CD4-positive, alpha-beta memory T cell (primary cell): ENCODE measurements at regions of chr10 and their contacts with region 1.

Region 1: GRCh38 chr10:28381903-28382347 is 79.1 kb upstream of the MPP7 start:
- DNase-seq: peak; percentile 78 to 85 (median 82)
- H3K4me3 ChIP-seq: no peak overlapping the region
- H3K4me3 Mint-ChIP-seq: peak overlapping the region in 3 of 8 donors; percentile 42 to 63 (median 45)
- H3K27ac ChIP-seq: no peak overlapping the region
- H3K27ac Mint-ChIP-seq: peak overlapping the region in 5 of 7 donors; percentile 0 to 94 (median 68)
- H3K4me1 ChIP-seq: peaks cover 17% of the 10 kb centered on the region
- H3K4me1 Mint-ChIP-seq: peaks cover 18 to 25% (median 21%) of the 10 kb centered on the region in 4 donors
- H3K27me3 ChIP-seq: no peaks in the 10 kb centered on the region
- H3K27me3 Mint-ChIP-seq: peaks cover 4 to 5% of the 10 kb centered on the region in 2 donors

Region 2: DNA sequence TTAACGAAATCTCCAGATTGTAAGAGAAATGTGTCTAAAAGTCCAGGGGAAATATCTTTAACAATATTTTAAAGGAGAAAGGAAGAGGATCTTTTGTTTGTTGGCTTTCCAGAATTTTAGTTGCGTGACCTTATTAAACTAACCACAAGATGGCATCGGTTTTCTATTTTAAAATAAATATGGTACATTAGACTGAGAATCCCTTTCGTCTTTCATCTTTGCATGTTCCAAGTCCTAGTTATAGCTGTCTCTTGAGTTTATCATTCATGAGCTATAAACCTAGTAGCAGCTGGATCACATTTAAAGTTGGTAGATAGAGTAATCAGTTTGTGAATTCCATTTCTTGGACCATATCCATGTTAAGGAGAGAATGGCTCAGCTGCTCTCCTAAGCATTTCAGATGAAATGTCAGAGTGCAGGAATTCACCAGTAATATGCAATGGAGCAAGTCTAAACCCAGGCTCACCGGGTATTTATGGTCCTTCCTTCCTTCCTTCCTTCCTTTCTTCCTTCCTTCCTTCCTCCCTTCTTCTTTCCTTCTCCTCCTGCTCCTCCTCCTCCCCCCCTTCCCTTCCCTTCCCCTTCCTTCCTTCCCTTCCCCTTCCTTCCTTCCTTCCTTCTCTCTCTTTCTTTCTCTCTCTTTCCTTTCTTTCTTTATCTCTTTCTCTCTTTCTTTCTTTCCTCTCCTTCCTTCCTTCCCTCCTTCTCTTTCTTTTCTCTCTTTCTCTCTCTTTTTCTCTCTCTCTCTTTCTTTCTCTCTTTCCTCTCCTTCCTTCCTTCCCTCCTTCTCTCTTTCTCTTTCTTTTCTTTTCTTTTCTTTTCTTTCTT is 935.6 kb before region 1 on chr10:
- CTCF ChIA-PET with region 1: no interaction called
- POLR2A ChIA-PET with region 1: no interaction called
- intact Hi-C with region 1: loop called (anchors 5 kb)
- DNase-seq: peak in 4 of 5 donors; percentile 46 to 50 (median 47)
- H3K4me3 ChIP-seq: no peak overlapping the region
- H3K4me3 Mint-ChIP-seq: peak overlapping the region in 3 of 8 donors; percentile 13 to 41 (median 36)
- H3K27ac ChIP-seq: no peak overlapping the region
- H3K27ac Mint-ChIP-seq: peak overlapping the region in 2 of 7 donors; percentile 8 to 45
- H3K4me1 ChIP-seq: peaks cover 12% of the 10 kb centered on the region
- H3K4me1 Mint-ChIP-seq: peaks cover 3 to 17% (median 13%) of the 10 kb centered on the region in 4 donors
- H3K27me3 ChIP-seq: no peaks in the 10 kb centered on the region
- H3K27me3 Mint-ChIP-seq: no peaks in the 10 kb centered on the region

Region 3: DNA sequence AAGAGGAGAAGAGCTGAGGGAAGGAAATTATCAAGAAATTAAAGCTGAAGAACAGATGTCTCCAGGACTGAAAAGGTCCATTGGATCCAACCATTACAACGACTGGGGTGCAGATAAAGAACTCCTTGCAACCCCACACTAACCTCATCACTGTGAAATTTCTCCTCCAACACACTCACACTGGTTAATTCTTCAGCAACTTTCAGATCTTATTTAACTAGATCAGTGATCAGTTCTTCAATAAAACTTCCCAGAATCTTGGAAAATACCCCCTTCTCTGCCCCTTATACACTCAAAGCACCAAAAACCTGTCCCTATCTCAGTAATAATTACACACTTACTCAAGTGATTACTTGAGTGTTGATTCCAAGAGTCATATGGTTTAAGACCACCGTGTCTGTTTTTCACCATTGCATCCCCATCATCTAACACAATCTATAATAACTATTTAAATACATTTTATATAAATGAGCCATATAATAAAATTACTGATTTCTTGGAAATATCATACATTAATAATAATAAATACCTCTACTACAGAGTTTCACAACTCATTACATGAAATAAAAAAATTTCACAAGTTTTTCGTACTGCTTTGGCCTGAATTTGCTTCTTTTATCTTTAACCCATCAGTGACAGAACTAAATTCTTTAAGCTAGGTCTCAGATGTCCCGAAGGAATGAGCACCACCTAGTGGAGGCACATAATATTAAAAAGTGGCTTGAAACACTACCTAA is 202.8 kb before region 1 on chr10:
- CTCF ChIA-PET with region 1: no interaction called
- POLR2A ChIA-PET with region 1: no interaction called
- intact Hi-C with region 1: loop called (anchors 2 kb)
- DNase-seq: peak; percentile 49 to 63 (median 55)
- H3K4me3 ChIP-seq: peak overlapping the region; percentile 40 to 49
- H3K4me3 Mint-ChIP-seq: peak overlapping the region; percentile 89 to 99 (median 92)
- H3K27ac ChIP-seq: peak overlapping the region; percentile 50
- H3K27ac Mint-ChIP-seq: peak overlapping the region; percentile 86 to 99 (median 96)
- H3K4me1 ChIP-seq: peaks cover 24% of the 10 kb centered on the region
- H3K4me1 Mint-ChIP-seq: peaks cover 21 to 48% (median 28%) of the 10 kb centered on the region in 4 donors
- H3K27me3 ChIP-seq: no peaks in the 10 kb centered on the region
- H3K27me3 Mint-ChIP-seq: no peaks in the 10 kb centered on the region

Region 4: DNA sequence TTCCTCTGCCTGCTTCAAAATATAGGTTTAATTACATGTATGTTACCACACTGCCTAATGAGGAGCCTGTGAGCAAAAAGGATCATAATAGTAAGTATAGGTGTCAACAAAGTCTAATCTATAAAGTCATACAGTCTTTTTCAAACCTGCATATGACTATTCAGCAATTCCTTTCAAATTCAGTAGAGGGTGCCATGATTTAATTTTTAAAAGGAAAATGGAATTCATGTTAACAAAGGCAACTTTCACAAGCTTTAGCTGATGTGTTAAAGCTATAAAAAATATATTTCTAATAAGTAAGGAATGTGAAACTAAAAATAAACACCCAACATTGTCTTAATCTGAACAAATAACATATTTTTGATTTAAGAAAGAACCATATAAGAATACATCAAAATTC is 131.1 kb before region 1 on chr10:
- CTCF ChIA-PET with region 1: interaction called, 123 read pairs
- POLR2A ChIA-PET with region 1: interaction called, 8 read pairs
- intact Hi-C with region 1: loop called (anchors 1 kb)
- DNase-seq: peak in 4 of 5 donors; percentile 26 to 38 (median 33)
- H3K4me3 ChIP-seq: no peak overlapping the region
- H3K4me3 Mint-ChIP-seq: no peak overlapping the region
- H3K27ac ChIP-seq: no peak overlapping the region
- H3K27ac Mint-ChIP-seq: peak overlapping the region in 1 of 7 donors; percentile 26
- H3K4me1 ChIP-seq: no peaks in the 10 kb centered on the region
- H3K4me1 Mint-ChIP-seq: peaks cover 7 to 22% (median 10%) of the 10 kb centered on the region in 4 donors
- H3K27me3 ChIP-seq: no peaks in the 10 kb centered on the region
- H3K27me3 Mint-ChIP-seq: no peaks in the 10 kb centered on the region

Region 5: DNA sequence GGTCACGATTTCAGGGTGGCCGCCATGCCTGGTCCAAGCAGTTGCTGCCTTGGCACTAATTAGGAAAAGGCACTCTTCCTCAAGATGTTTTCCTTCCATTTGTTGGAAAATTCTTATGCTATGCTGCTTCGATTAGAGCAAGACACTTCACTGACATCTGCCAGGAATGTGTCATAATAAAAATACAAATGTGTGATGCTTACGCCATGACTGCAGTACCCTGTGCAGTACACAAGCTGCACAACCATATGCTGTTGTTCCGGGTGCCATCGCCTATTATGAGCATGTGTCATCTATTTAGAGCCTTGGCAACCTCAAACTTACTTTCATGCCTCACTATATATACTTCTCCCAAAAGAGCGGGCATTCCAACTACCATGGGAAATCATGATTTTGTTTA is 64.2 kb before region 1 on chr10:
- CTCF ChIA-PET with region 1: interaction called, 15 read pairs
- POLR2A ChIA-PET with region 1: interaction called, 3 read pairs
- intact Hi-C with region 1: no loop called
- DNase-seq: no peak
- H3K4me3 ChIP-seq: no peak overlapping the region
- H3K4me3 Mint-ChIP-seq: no peak overlapping the region
- H3K27ac ChIP-seq: no peak overlapping the region
- H3K27ac Mint-ChIP-seq: peak overlapping the region in 3 of 7 donors; percentile 52 to 68 (median 64)
- H3K4me1 ChIP-seq: peaks cover 4% of the 10 kb centered on the region
- H3K4me1 Mint-ChIP-seq: peaks cover 24 to 50% (median 27%) of the 10 kb centered on the region in 4 donors
- H3K27me3 ChIP-seq: no peaks in the 10 kb centered on the region
- H3K27me3 Mint-ChIP-seq: no peaks in the 10 kb centered on the region